ENCODE measurements at regions of chr1 and their contacts with region 1.

Region 1: DNA sequence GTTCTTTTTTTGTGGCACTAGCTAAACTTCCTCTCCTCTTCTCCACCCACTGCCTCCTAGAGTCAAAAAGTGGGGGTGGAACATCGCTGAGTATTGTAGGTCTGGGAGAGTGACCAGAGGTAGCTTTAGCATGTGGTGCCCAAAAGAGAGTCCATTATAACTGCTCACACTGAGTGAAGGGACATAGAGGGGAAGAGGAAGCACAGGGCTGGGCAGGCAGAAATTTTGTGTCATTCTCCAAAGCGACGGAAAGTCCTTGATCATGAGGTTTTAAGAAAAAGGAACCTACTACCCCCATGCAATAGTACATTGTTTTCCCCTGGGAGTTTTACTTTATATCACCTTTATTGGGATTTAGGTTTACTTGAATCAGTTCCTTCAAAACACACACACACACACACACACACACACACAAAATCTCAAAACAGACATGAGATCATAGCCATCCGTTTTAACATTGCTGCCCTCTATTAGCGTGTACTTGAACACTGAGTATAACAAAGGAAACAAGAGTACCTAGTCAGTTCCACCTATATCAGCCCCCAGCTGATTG is 4.1 kb downstream of the CD84 start:
- DNase-seq: no peak
- H3K4me3 Mint-ChIP-seq: peak overlapping the region; percentile 46
- H3K27ac Mint-ChIP-seq: peak overlapping the region; percentile 94
- H3K4me1 Mint-ChIP-seq: peaks cover 86% of the 10 kb centered on the region
- H3K27me3 Mint-ChIP-seq: no peaks in the 10 kb centered on the region

Region 2: DNA sequence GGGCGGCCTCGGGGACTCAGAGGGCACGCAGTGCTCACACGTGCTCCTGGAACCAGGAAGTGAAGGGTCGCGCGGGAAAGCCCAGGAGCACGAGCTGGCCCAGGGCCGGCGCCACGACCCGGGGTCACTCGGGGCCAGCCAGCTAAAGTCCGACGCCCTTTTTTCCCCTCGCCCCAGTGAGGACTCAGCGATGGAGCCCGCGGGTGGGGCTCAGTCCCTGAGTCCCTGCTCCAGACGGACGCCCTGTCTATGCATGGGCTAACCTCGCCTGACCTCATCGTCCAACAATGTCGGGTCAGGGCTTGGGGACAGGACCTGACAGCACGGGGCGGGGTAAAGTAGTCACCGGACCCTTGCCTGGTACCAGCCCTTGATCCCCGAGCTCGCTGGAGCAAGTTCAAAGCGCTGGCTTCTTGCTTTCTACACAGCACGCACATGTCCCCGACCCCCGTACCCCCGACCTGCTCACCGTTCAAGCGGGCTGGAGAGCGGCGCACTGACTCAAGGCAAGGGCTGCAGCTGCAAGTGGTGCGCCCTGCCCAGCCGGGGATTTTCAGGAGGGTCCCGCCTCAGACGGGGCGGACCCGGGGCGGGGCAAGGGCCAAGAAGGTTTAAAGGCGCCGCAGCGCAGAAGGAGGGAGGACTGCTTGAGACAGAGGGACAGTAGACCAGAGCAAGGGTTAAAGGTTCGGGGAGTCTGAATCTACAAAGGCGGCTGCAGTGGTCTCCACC is 650.0 kb before region 1 on chr1 and contains the start of gene TAGLN2:
- CTCF ChIA-PET with region 1: no interaction called
- intact Hi-C with region 1: loop called (anchors 10 kb)
- DNase-seq: peak; percentile 89
- H3K4me3 Mint-ChIP-seq: peak within 1 kb of the TSS; percentile 91
- H3K27ac Mint-ChIP-seq: peak within 1 kb of the TSS; percentile 93
- H3K4me1 Mint-ChIP-seq: peaks cover 42% of the 10 kb centered on the region
- H3K27me3 Mint-ChIP-seq: no peaks in the 10 kb centered on the region
- total RNA-seq, gene TAGLN2: 453 to 454 TPM

Region 3: GRCh38 chr1:160451119-160451858 is 123.9 kb before region 1 on chr1:
- CTCF ChIA-PET with region 1: no interaction called
- intact Hi-C with region 1: loop called (anchors 1 kb)
- DNase-seq: no peak
- H3K4me3 Mint-ChIP-seq: peak overlapping the region; percentile 56
- H3K27ac Mint-ChIP-seq: peak overlapping the region; percentile 93
- H3K4me1 Mint-ChIP-seq: peaks cover 76% of the 10 kb centered on the region
- H3K27me3 Mint-ChIP-seq: no peaks in the 10 kb centered on the region

Region 4: GRCh38 chr1:160539990-160540858 is 35.0 kb before region 1 on chr1:
- CTCF ChIA-PET with region 1: interaction called, 9 read pairs
- intact Hi-C with region 1: loop called (anchors 1 kb)
- DNase-seq: peak; percentile 73
- H3K4me3 Mint-ChIP-seq: peak overlapping the region; percentile 52
- H3K27ac Mint-ChIP-seq: peak overlapping the region; percentile 96
- H3K4me1 Mint-ChIP-seq: peaks cover 55% of the 10 kb centered on the region
- H3K27me3 Mint-ChIP-seq: no peaks in the 10 kb centered on the region

Region 5: GRCh38 chr1:160618763-160619274 is 43.6 kb after region 1 on chr1:
- CTCF ChIA-PET with region 1: no interaction called
- intact Hi-C with region 1: loop called (anchors 1 kb)
- DNase-seq: peak; percentile 70
- H3K4me3 Mint-ChIP-seq: no peak overlapping the region
- H3K27ac Mint-ChIP-seq: peak overlapping the region; percentile 61
- H3K4me1 Mint-ChIP-seq: peaks cover 57% of the 10 kb centered on the region
- H3K27me3 Mint-ChIP-seq: no peaks in the 10 kb centered on the region